SK-N-SH (cell line): ENCODE measurements at regions of chr7 and their contacts with region 1.

Region 1: GRCh38 chr7:123494193-123494796 is 40.1 kb downstream of the IQUB start:
- DNase-seq: peak; percentile 41
- H3K4me3 ChIP-seq: no peak overlapping the region; a peak in 1 of 4 replicates
- H3K27ac ChIP-seq: no peak overlapping the region
- H3K4me1 ChIP-seq: no peaks in the 10 kb centered on the region; a peak in 1 of 4 replicates
- H3K27me3 ChIP-seq: no peaks in the 10 kb centered on the region
- CTCF ChIP-seq: peak; percentile 98
- EP300 ChIP-seq: no peak
- RAD21 ChIP-seq: peak; percentile 92

Region 2: DNA sequence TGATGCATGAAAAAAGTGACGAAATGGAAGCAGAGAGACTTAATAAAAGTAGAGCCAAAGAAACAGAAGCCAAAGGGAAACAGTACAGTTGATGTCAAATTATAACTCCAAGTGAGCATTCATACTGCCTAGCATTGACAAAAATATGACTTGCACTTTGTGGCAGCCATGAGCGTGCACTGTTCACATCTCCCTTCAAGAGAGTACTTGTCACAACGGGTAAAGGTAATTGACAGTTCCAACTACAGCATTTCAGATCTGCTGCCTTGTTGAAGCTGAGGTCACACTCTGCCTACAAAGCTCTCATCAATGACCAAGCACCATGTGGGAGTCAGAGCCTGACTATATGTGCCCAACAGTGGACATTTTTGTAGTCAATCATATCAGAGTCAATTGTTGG is 14.2 kb before region 1 on chr7:
- CTCF ChIA-PET with region 1: interaction called, 19 read pairs
- POLR2A ChIA-PET with region 1: no interaction called
- DNase-seq: no peak
- H3K4me3 ChIP-seq: no peak overlapping the region
- H3K27ac ChIP-seq: no peak overlapping the region
- H3K4me1 ChIP-seq: no peaks in the 10 kb centered on the region; a peak in 1 of 4 replicates
- H3K27me3 ChIP-seq: no peaks in the 10 kb centered on the region
- CTCF ChIP-seq: no peak
- EP300 ChIP-seq: no peak
- RAD21 ChIP-seq: no peak

Region 3: GRCh38 chr7:123522066-123522465 is 27.8 kb after region 1 on chr7:
- CTCF ChIA-PET with region 1: interaction called, 14 read pairs
- POLR2A ChIA-PET with region 1: no interaction called
- DNase-seq: no peak
- H3K4me3 ChIP-seq: no peak overlapping the region
- H3K27ac ChIP-seq: no peak overlapping the region
- H3K4me1 ChIP-seq: no peaks in the 10 kb centered on the region
- H3K27me3 ChIP-seq: no peaks in the 10 kb centered on the region
- CTCF ChIP-seq: no peak
- EP300 ChIP-seq: no peak
- RAD21 ChIP-seq: no peak

Region 4: GRCh38 chr7:123534383-123535260 is 40.3 kb after region 1 on chr7 and contains the start of gene IQUB:
- CTCF ChIA-PET with region 1: interaction called, 69 read pairs
- POLR2A ChIA-PET with region 1: no interaction called
- DNase-seq: peak; percentile 100
- H3K4me3 ChIP-seq: peak within 1 kb of the TSS; percentile 70 to 73
- H3K27ac ChIP-seq: peak within 1 kb of the TSS; percentile 65 to 73
- H3K4me1 ChIP-seq: peaks cover 8 to 20% of the 10 kb centered on the region in 2 experiments
- H3K27me3 ChIP-seq: no peaks in the 10 kb centered on the region
- CTCF ChIP-seq: no peak
- EP300 ChIP-seq: no peak
- RAD21 ChIP-seq: no peak
- polyA plus RNA-seq, gene IQUB: 0.10 and 0.11 TPM in 2 replicates

Region 5: DNA sequence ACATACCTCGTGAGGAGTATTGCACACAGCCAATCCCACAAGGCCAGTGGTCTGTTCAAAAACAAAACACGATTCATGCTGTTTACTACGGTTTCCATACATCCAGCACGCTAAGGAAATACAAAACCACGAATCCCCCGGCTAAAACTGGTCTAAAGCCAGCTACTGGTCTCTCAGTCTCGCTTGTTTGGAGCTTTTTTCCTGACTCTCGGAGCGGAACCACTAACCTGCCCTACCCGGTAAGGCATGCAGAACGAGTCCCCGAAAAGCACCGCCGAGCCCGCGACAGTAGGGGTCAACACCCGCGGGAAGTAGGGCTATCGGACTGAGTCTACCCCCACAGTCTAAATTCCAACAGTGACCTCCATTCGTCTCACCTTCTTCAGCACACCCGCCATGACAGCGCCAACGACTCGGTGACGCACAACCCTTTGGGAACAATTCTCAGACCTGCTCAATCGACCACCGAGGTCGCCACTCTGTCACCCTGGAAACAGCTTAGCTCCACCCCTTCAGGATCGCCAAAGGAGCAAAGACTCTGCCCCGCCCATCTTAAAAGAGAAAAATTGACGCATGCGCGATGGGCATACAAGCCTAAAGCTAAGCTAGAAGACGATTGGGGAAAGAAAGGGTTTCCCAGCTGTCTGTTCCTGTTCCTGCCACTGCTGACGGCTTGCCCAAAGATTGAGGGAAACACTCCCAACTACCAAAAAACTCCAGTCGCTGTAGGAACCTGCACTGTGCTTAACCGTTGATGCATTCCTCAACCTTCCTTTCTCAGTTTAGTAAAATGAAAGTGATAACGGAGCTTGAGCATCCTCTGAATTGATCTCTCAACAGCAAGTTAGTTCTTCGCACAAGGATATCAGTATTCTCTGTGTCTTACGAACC is 63.3 kb after region 1 on chr7 and contains the start of gene NDUFA5:
- CTCF ChIA-PET with region 1: interaction called, 18 read pairs
- POLR2A ChIA-PET with region 1: no interaction called
- DNase-seq: peak; percentile 87
- H3K4me3 ChIP-seq: peak within 1 kb of the TSS; percentile 95 to 98
- H3K27ac ChIP-seq: peak within 1 kb of the TSS; percentile 76 to 96
- H3K4me1 ChIP-seq: peaks cover 9 to 12% of the 10 kb centered on the region in 2 experiments
- H3K27me3 ChIP-seq: no peaks in the 10 kb centered on the region
- CTCF ChIP-seq: no peak
- EP300 ChIP-seq: no peak
- RAD21 ChIP-seq: no peak
- polyA plus RNA-seq, gene NDUFA5: 10.9 and 14.6 TPM in 2 replicates